ENCODE measurements at regions of chr10 and their contacts with region 1.

Region 1: GRCh38 chr10:71713135-71714030 is 6.2 kb downstream of the C10orf105 start:
- DNase-seq: peak; percentile 96
- H3K4me3 ChIP-seq: no peak overlapping the region
- H3K27ac ChIP-seq: peak overlapping the region; percentile 87 to 90 (median 87)
- H3K4me1 ChIP-seq: peaks cover 0 to 53% (median 38%) of the 10 kb centered on the region in 4 donors
- H3K27me3 ChIP-seq: no peaks in the 10 kb centered on the region
- CTCF ChIP-seq: peak in 1 of 4 experiments; percentile 10
- EP300 ChIP-seq: no peak
- POLR2A ChIP-seq: no peak

Region 2: DNA sequence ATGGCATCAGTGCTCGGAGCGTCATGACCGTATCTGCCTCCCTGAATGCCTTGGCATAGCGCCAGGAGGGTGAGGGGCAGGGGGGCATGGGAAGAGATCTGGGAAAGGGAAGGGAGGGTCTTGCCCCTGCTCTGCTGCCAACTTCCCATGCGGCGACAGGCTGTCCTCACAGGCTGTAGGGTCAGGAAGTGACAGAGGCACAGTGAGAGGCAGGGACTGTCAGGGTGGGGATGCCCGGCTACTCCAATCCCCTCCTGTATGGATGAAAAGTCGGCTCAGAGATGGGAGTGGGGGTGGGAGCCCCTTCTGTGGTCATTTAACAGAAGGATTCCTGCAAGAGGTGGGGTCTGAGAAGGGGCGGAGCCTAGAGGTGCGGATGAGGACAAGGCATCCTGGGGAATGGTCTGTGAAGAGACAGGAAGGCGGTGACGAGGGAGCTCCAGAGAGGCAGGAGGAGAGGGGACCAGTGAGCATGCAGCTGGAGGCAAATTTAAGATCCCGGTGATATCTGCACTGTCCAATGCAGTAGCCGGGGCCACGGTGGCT is 521.8 kb before region 1 on chr10:
- intact Hi-C with region 1: no loop called
- DNase-seq: no peak
- H3K4me3 ChIP-seq: no peak overlapping the region
- H3K27ac ChIP-seq: no peak overlapping the region
- H3K4me1 ChIP-seq: peaks cover 0 to 10% (median 5%) of the 10 kb centered on the region in 4 donors
- H3K27me3 ChIP-seq: no peaks in the 10 kb centered on the region
- CTCF ChIP-seq: no peak
- EP300 ChIP-seq: no peak
- POLR2A ChIP-seq: no peak

Region 3: DNA sequence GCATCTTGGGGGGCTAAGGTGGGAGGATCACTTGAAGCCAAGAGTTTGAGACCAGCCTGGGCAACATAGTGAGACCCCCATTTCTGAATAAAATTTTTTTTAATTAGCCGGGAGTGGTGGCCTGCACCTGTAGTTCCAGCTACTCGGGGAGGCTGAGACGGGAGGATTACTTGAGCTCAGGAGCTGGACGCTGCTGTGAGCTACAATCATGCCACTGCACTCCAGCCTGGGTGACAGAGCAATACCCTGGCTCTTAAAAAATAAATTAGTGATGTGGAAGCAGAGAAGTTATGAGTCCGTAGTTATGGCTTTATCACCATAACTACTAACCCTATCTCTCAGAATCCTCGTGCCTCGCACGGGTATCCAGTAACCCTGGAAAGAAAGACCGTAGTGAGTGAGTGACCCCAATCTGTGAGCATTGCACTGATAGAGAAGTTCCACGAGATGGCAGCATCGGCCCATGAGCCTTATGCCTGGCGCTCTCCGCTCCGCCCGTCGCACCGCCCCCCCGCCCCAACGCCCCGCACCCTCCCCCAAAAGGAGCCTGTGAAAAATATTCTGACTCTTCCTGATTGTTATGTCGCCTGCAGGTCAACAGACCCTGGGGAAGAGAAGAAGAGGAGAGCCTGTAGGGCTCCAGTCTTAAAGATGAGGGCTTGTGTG is 399.2 kb before region 1 on chr10:
- intact Hi-C with region 1: loop called (anchors 2 kb)
- DNase-seq: peak; percentile 80
- H3K4me3 ChIP-seq: peak overlapping the region in 1 of 4 donors; percentile 6
- H3K27ac ChIP-seq: peak overlapping the region; percentile 62 to 73 (median 66)
- H3K4me1 ChIP-seq: peaks cover 0 to 33% (median 29%) of the 10 kb centered on the region in 4 donors
- H3K27me3 ChIP-seq: no peaks in the 10 kb centered on the region
- CTCF ChIP-seq: peak; percentile 66 to 88 (median 72)
- EP300 ChIP-seq: no peak
- POLR2A ChIP-seq: no peak

Region 4: GRCh38 chr10:71378336-71379117 is 334.9 kb before region 1 on chr10:
- intact Hi-C with region 1: loop called (anchors 5 kb)
- DNase-seq: no peak
- H3K4me3 ChIP-seq: no peak overlapping the region
- H3K27ac ChIP-seq: peak overlapping the region in 3 of 4 donors; percentile 82 to 88 (median 87)
- H3K4me1 ChIP-seq: peaks cover 0 to 10% (median 8%) of the 10 kb centered on the region in 4 donors
- H3K27me3 ChIP-seq: no peaks in the 10 kb centered on the region
- CTCF ChIP-seq: no peak
- EP300 ChIP-seq: no peak
- POLR2A ChIP-seq: no peak

Region 5: GRCh38 chr10:71396084-71396720 is 317.2 kb before region 1 on chr10:
- intact Hi-C with region 1: loop called (anchors 5 kb)
- DNase-seq: peak; percentile 75
- H3K4me3 ChIP-seq: peak overlapping the region; percentile 43 to 61 (median 52)
- H3K27ac ChIP-seq: peak overlapping the region in 3 of 4 donors; percentile 19 to 79 (median 63)
- H3K4me1 ChIP-seq: peaks cover 0 to 26% (median 18%) of the 10 kb centered on the region in 4 donors
- H3K27me3 ChIP-seq: peaks cover 23 to 46% (median 38%) of the 10 kb centered on the region in 3 donors
- CTCF ChIP-seq: peak; percentile 21 to 55 (median 38)
- EP300 ChIP-seq: no peak
- POLR2A ChIP-seq: no peak

Region 6: GRCh38 chr10:71766702-71767419 is 53.5 kb after region 1 on chr10:
- intact Hi-C with region 1: loop called (anchors 2 kb)
- DNase-seq: peak; percentile 89
- H3K4me3 ChIP-seq: no peak overlapping the region
- H3K27ac ChIP-seq: peak overlapping the region; percentile 89 to 98 (median 92)
- H3K4me1 ChIP-seq: peaks cover 0 to 99% (median 98%) of the 10 kb centered on the region in 4 donors
- H3K27me3 ChIP-seq: no peaks in the 10 kb centered on the region
- CTCF ChIP-seq: no peak
- EP300 ChIP-seq: peak in 1 of 4 donors; percentile 59
- POLR2A ChIP-seq: no peak

Region 7: GRCh38 chr10:71771821-71772617 is 58.6 kb after region 1 on chr10:
- intact Hi-C with region 1: loop called (anchors 1 kb)
- DNase-seq: peak; percentile 96
- H3K4me3 ChIP-seq: peak overlapping the region; percentile 67 to 87 (median 70)
- H3K27ac ChIP-seq: peak overlapping the region; percentile 89 to 98 (median 92)
- H3K4me1 ChIP-seq: peaks cover 0 to 75% (median 65%) of the 10 kb centered on the region in 4 donors
- H3K27me3 ChIP-seq: no peaks in the 10 kb centered on the region
- CTCF ChIP-seq: no peak
- EP300 ChIP-seq: peak in 2 of 4 donors; percentile 43 to 46
- POLR2A ChIP-seq: peak; percentile 51 to 53

Region 8: DNA sequence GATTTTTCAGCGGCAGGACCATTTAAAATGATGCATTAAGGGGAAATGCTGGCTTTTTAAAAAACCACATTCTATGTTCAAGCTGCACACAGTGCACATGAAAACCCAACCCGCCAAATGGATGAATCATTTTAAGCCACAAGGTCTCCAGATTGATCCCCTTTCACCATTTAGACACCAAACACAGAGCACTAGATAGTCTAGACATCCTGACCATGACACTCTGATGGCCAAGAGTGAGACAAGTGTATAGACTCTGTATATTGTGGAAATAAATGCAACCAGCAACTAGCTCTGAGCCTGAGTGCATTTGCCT is 109.0 kb after region 1 on chr10:
- intact Hi-C with region 1: no loop called
- DNase-seq: no peak
- H3K4me3 ChIP-seq: no peak overlapping the region
- H3K27ac ChIP-seq: no peak overlapping the region
- H3K4me1 ChIP-seq: no peaks in the 10 kb centered on the region
- H3K27me3 ChIP-seq: no peaks in the 10 kb centered on the region
- CTCF ChIP-seq: no peak
- EP300 ChIP-seq: no peak
- POLR2A ChIP-seq: no peak

Region 9: GRCh38 chr10:71933651-71934050 is 220.3 kb after region 1 on chr10:
- intact Hi-C with region 1: no loop called
- DNase-seq: no peak
- H3K4me3 ChIP-seq: no peak overlapping the region
- H3K27ac ChIP-seq: no peak overlapping the region
- H3K4me1 ChIP-seq: no peaks in the 10 kb centered on the region
- H3K27me3 ChIP-seq: no peaks in the 10 kb centered on the region
- CTCF ChIP-seq: no peak
- EP300 ChIP-seq: no peak
- POLR2A ChIP-seq: no peak

Measured in sigmoid colon (tissue), 7 donors.